ENCODE measurements at regions of chr10 and their contacts with region 1.

Region 1: GRCh38 chr10:133394064-133394663 is at the start of gene MTG1:
- DNase-seq: peak; percentile 80 to 96 (median 93)
- ATAC-seq: peak; percentile 68
- H3K4me3 ChIP-seq: peak within 1 kb of the TSS; percentile 69 to 92
- H3K4me3 Mint-ChIP-seq: peak within 1 kb of the TSS; percentile 86
- H3K27ac ChIP-seq: peak within 1 kb of the TSS; percentile 71 to 76
- H3K27ac Mint-ChIP-seq: peak within 1 kb of the TSS; percentile 89
- H3K4me1 ChIP-seq: peaks cover 40% of the 10 kb centered on the region
- H3K4me1 Mint-ChIP-seq: peaks cover 50% of the 10 kb centered on the region
- H3K27me3 ChIP-seq: no peaks in the 10 kb centered on the region
- H3K27me3 Mint-ChIP-seq: no peaks in the 10 kb centered on the region
- CTCF ChIP-seq: no peak
- total RNA-seq, gene MTG1: 30.2 to 31.0 TPM

Region 2: GRCh38 chr10:132204781-132205473 is 1189.2 kb before region 1 on chr10:
- CTCF ChIA-PET with region 1: no interaction called
- POLR2A ChIA-PET with region 1: no interaction called
- intact Hi-C with region 1: no loop called
- DNase-seq: no peak
- ATAC-seq: no peak
- H3K4me3 ChIP-seq: no peak overlapping the region
- H3K4me3 Mint-ChIP-seq: no peak overlapping the region
- H3K27ac ChIP-seq: no peak overlapping the region
- H3K27ac Mint-ChIP-seq: no peak overlapping the region
- H3K4me1 ChIP-seq: no peaks in the 10 kb centered on the region
- H3K4me1 Mint-ChIP-seq: no peaks in the 10 kb centered on the region
- H3K27me3 ChIP-seq: no peaks in the 10 kb centered on the region
- H3K27me3 Mint-ChIP-seq: no peaks in the 10 kb centered on the region
- CTCF ChIP-seq: no peak

Region 3: DNA sequence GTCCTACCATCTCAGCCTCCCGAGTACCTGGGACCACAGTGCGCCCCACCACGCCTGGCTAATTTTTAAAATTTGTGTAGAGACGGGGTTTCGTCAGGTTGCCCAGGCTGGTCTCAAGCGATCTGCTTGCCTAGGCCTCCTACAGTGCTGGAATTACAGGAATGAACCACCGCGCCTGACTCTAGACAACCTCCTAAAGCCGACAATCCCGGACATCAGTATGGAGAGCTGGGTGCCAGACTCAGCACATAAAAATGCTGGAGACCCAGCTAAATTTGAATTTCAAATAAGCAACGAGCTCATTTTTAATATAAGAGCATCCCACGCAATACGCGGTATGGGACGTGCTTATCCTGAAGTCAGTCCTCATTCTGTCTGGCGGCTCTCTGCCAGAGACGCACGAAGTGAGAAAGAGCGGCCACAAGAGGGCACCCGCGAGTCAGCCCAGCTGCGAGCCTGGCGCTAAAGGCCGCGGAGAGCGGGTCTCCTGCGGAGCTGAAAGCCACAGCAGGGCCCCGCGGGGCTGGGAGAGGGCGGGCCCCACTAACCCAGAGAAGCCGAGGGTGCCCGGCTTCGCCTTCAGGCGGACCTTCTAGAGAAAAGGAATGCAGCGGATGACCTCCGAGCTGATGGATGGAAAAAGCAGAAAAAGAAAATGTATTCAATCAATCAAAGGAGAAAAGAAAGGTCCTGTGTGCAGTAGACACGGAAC is 64.5 kb before region 1 on chr10:
- CTCF ChIA-PET with region 1: interaction called, 28 read pairs
- POLR2A ChIA-PET with region 1: no interaction called
- intact Hi-C with region 1: loop called in 1 of 2 experiments (anchors 2 kb)
- DNase-seq: peak; percentile 75 to 94 (median 89)
- ATAC-seq: peak; percentile 81
- H3K4me3 ChIP-seq: peak overlapping the region; percentile 4 to 6
- H3K4me3 Mint-ChIP-seq: no peak overlapping the region
- H3K27ac ChIP-seq: no peak overlapping the region
- H3K27ac Mint-ChIP-seq: no peak overlapping the region
- H3K4me1 ChIP-seq: peaks cover 13% of the 10 kb centered on the region
- H3K4me1 Mint-ChIP-seq: peaks cover 9% of the 10 kb centered on the region
- H3K27me3 ChIP-seq: peaks cover 23 to 33% of the 10 kb centered on the region in 2 experiments
- H3K27me3 Mint-ChIP-seq: peaks cover 28% of the 10 kb centered on the region
- CTCF ChIP-seq: peak; percentile 96

Region 4: DNA sequence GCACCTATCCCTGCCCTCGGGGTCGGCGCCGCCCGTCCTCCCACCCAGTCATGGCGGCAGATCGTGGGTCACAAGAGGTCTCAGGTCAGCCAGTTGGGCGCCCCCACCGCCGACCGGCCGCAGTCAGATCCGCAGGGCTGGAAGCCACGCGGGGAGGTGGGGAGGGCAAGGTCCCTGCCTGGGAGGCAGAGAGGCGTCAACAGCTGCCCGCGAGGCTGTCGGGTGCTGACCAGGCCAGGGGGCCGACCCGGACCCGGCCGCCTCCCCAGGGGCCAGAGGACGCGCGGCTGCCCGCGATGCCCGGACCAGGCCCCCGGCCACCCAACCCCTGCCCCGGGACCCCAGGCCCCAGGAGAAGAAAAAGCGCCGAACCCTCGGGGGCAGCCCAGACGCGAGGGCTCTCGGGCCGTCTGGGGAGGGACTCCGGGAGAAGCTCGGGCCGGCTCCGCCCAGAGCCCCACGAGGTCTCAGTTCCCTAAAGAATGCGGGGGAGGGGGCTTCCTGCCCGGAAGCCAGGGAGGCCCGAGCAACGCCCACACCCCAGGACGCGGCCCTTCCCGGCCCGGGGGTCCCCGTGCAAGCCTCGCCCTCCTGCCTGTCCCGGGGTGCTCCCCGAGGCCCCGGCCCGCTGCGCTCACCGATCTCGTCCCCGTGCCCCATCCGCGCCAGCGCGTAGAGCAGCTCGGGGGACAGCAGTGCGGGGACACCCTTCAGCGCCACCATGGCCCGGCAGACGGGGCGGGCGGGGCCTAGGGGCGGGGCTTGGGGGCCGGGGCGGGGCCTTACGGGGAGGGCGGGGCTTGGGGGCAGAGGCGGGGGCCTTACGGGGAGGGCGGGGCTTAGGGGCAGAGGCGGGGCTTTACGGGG is 36.6 kb before region 1 on chr10 and contains the start of gene FUOM:
- CTCF ChIA-PET with region 1: no interaction called
- POLR2A ChIA-PET with region 1: interaction called, 9 read pairs
- intact Hi-C with region 1: loop called (anchors 1 kb)
- DNase-seq: peak; percentile 50 to 84 (median 66)
- ATAC-seq: peak; percentile 92
- H3K4me3 ChIP-seq: peak within 1 kb of the TSS; percentile 61 to 72
- H3K4me3 Mint-ChIP-seq: peak within 1 kb of the TSS; percentile 81
- H3K27ac ChIP-seq: peak within 1 kb of the TSS in 1 of 2 experiments; percentile 44
- H3K27ac Mint-ChIP-seq: peak within 1 kb of the TSS; percentile 49
- H3K4me1 ChIP-seq: peaks cover 12% of the 10 kb centered on the region
- H3K4me1 Mint-ChIP-seq: peaks cover 19% of the 10 kb centered on the region
- H3K27me3 ChIP-seq: no peaks in the 10 kb centered on the region
- H3K27me3 Mint-ChIP-seq: no peaks in the 10 kb centered on the region
- CTCF ChIP-seq: no peak
- total RNA-seq, gene FUOM: 7.9 to 10.0 TPM

Region 5: DNA sequence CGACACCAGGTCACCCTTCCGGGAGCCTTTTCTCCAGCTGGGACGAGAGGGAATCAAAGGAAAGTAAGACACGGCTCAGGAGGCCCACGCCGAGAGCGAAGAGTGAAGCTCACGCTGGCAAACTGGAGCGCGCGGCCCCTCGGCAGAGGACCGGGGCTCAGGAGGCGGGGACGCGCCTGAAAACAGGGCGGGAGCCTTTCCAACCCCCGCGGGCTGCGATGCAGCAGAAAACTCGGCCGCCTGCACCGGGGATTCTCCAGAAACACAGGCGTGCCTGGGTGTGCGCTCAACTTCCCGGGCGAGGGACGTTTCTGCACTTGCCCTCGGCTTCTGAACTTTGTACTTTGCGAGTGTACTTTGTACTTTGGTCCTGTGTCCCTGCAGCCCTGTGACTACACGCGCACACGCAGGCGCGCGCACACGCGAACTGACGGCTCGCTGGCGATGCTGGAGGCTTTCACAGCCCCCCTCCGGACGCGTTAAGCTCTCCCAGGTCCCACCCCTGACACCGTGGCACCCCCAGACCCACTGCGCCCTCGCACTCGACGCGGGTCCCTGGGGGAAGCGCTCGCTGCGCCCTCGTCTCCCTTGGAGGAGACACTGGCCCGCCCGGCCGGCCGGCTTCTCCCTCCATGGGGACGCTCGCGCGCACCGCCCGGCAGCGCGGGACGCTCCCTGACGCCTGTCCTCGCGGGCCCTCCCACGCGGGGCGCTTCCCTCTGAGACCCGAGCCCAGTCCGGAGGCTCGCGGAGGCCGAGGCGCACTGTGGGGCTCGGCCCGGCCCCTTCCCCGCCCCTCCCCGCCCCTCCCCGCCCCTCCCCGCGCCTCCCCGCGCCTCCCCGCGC is 15.7 kb before region 1 on chr10:
- CTCF ChIA-PET with region 1: interaction called, 5 read pairs
- POLR2A ChIA-PET with region 1: interaction called, 38 read pairs
- intact Hi-C with region 1: loop called (anchors 1 kb)
- DNase-seq: peak in 8 of 9 experiments; percentile 36 to 78 (median 60)
- ATAC-seq: peak; percentile 61
- H3K4me3 ChIP-seq: peak overlapping the region; percentile 85 to 95
- H3K4me3 Mint-ChIP-seq: peak overlapping the region; percentile 87
- H3K27ac ChIP-seq: peak overlapping the region; percentile 40 to 43
- H3K27ac Mint-ChIP-seq: peak overlapping the region; percentile 66
- H3K4me1 ChIP-seq: peaks cover 17% of the 10 kb centered on the region
- H3K4me1 Mint-ChIP-seq: peaks cover 10% of the 10 kb centered on the region
- H3K27me3 ChIP-seq: no peaks in the 10 kb centered on the region
- H3K27me3 Mint-ChIP-seq: no peaks in the 10 kb centered on the region
- CTCF ChIP-seq: no peak

Measured in CD8-positive, alpha-beta T cell (primary cell).